ENCODE measurements at regions of chr5 and their contacts with region 1.

Region 1: GRCh38 chr5:138077065-138077696 is 6.7 kb upstream of the WNT8A start:
- DNase-seq: no peak
- ATAC-seq: peak; percentile 59
- H3K4me3 ChIP-seq: no peak overlapping the region
- H3K27ac ChIP-seq: no peak overlapping the region
- H3K4me1 ChIP-seq: peaks cover 7% of the 10 kb centered on the region
- H3K27me3 ChIP-seq: no peaks in the 10 kb centered on the region
- CTCF ChIP-seq: peak; percentile 75 to 92 (median 79)
- EP300 ChIP-seq: no peak
- POLR2A ChIP-seq: no peak
- RAD21 ChIP-seq: peak; percentile 89

Region 2: GRCh38 chr5:137344723-137345322 is 732.4 kb before region 1 on chr5:
- CTCF ChIA-PET with region 1: no interaction called
- POLR2A ChIA-PET with region 1: no interaction called
- RAD21 ChIA-PET with region 1: no interaction called
- SMC1A ChIA-PET with region 1: no interaction called
- in situ Hi-C with region 1: loop called (anchors 25 kb)
- intact Hi-C with region 1: no loop called
- DNase-seq: no peak
- ATAC-seq: peak; percentile 34; the same call in 1 of the 3 replicates
- H3K4me3 ChIP-seq: no peak overlapping the region
- H3K27ac ChIP-seq: no peak overlapping the region
- H3K4me1 ChIP-seq: no peaks in the 10 kb centered on the region
- H3K27me3 ChIP-seq: no peaks in the 10 kb centered on the region
- CTCF ChIP-seq: peak; percentile 45 to 96 (median 82)
- EP300 ChIP-seq: no peak
- POLR2A ChIP-seq: no peak
- RAD21 ChIP-seq: peak; percentile 60

Region 3: GRCh38 chr5:137921931-137922330 is 155.2 kb before region 1 on chr5:
- CTCF ChIA-PET with region 1: no interaction called
- POLR2A ChIA-PET with region 1: no interaction called
- RAD21 ChIA-PET with region 1: no interaction called
- SMC1A ChIA-PET with region 1: no interaction called
- in situ Hi-C with region 1: no loop called
- intact Hi-C with region 1: no loop called
- DNase-seq: no peak
- ATAC-seq: no peak
- H3K4me3 ChIP-seq: no peak overlapping the region
- H3K27ac ChIP-seq: no peak overlapping the region
- H3K4me1 ChIP-seq: no peaks in the 10 kb centered on the region
- H3K27me3 ChIP-seq: no peaks in the 10 kb centered on the region
- CTCF ChIP-seq: no peak
- EP300 ChIP-seq: no peak
- POLR2A ChIP-seq: no peak
- RAD21 ChIP-seq: no peak

Region 4: GRCh38 chr5:138065102-138065501 is 12.1 kb before region 1 on chr5:
- CTCF ChIA-PET with region 1: interaction called, 22 read pairs
- POLR2A ChIA-PET with region 1: no interaction called
- RAD21 ChIA-PET with region 1: interaction called, 3 read pairs
- SMC1A ChIA-PET with region 1: interaction called, 3 read pairs
- in situ Hi-C with region 1: no loop called
- intact Hi-C with region 1: no loop called
- DNase-seq: no peak
- ATAC-seq: peak; percentile 66
- H3K4me3 ChIP-seq: no peak overlapping the region
- H3K27ac ChIP-seq: no peak overlapping the region
- H3K4me1 ChIP-seq: no peaks in the 10 kb centered on the region
- H3K27me3 ChIP-seq: no peaks in the 10 kb centered on the region
- CTCF ChIP-seq: peak; percentile 45 to 66 (median 45); a peak in 5 of 6 replicates
- EP300 ChIP-seq: no peak
- POLR2A ChIP-seq: no peak
- RAD21 ChIP-seq: peak; percentile 33; the same call in 1 of the 2 replicates

Region 5: GRCh38 chr5:138095100-138095907 is 18.1 kb after region 1 on chr5:
- CTCF ChIA-PET with region 1: interaction called, 22 read pairs
- POLR2A ChIA-PET with region 1: interaction called, 4 read pairs
- RAD21 ChIA-PET with region 1: interaction called, 3 read pairs
- SMC1A ChIA-PET with region 1: interaction called, 4 read pairs
- in situ Hi-C with region 1: no loop called
- intact Hi-C with region 1: no loop called
- DNase-seq: no peak
- ATAC-seq: no peak
- H3K4me3 ChIP-seq: no peak overlapping the region
- H3K27ac ChIP-seq: no peak overlapping the region
- H3K4me1 ChIP-seq: no peaks in the 10 kb centered on the region
- H3K27me3 ChIP-seq: no peaks in the 10 kb centered on the region; a peak in 1 of 4 replicates
- CTCF ChIP-seq: no peak
- EP300 ChIP-seq: no peak
- POLR2A ChIP-seq: no peak
- RAD21 ChIP-seq: no peak

Region 6: DNA sequence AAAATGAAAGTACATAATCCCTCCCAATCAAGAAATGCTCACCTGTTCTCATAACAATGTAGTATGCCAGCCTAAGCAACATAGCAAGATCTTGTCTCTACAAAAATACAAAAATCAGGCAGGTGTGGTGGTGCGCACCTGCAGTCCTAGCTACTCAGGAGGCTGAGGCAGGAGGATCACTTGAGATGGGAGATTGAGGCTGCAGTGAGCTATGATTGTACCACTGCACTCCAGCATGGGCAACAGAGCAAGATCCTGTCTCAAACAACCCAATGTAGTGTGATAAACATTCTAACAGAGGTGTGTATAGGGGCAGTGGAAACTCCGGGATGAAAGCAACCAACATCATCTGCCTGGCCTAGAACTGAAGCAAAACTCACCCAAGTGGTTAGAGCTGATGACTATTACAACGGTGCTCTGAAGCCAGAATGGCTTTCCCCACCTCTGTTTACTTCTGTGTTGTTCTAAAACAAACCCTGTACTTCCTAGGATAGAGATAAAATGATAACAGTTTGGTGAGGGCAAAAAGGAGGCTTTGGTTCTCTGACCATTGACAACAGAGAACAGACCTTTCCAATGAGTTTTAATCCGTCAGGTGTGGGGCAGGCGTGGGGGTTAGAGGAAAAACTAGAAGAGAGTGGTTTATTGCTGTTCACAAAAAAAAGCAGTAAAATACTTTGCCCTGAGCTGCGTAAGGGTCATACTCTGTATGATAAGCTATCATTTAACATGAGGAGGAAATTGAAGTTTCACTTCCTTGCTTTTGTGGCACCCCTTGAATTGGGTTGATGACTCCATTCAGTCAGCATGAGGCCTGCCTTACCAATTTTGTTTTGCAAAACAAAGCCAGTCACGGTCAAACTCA is 25.5 kb after region 1 on chr5:
- CTCF ChIA-PET with region 1: interaction called, 11 read pairs
- POLR2A ChIA-PET with region 1: no interaction called
- RAD21 ChIA-PET with region 1: interaction called, 3 read pairs
- SMC1A ChIA-PET with region 1: interaction called, 4 read pairs
- in situ Hi-C with region 1: no loop called
- intact Hi-C with region 1: no loop called
- DNase-seq: no peak
- ATAC-seq: peak; percentile 83
- H3K4me3 ChIP-seq: no peak overlapping the region
- H3K27ac ChIP-seq: no peak overlapping the region
- H3K4me1 ChIP-seq: no peaks in the 10 kb centered on the region
- H3K27me3 ChIP-seq: no peaks in the 10 kb centered on the region
- CTCF ChIP-seq: no peak
- EP300 ChIP-seq: no peak
- POLR2A ChIP-seq: no peak
- RAD21 ChIP-seq: no peak

Region 7: DNA sequence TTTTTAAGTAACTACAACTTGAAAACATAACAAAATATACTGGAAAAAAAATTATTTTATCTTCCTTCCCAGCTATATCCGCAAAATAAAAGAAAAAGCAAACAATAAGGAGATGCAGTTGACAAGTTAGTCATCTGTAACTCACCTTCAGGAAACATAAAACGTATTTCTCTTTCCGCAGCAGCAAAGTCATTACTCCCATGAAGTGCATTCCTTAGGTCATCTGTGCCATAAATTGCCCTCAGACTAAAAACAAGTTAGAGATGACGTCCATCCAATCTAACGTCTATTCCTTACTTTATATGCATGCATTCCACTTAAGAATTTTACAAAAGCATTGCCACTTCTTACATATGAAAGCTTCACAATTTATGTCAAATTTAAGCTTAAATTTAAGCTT is 51.2 kb after region 1 on chr5:
- CTCF ChIA-PET with region 1: interaction called, 243 read pairs
- POLR2A ChIA-PET with region 1: interaction called, 3 read pairs
- RAD21 ChIA-PET with region 1: interaction called, 59 read pairs
- SMC1A ChIA-PET with region 1: interaction called, 87 read pairs
- in situ Hi-C with region 1: loop called (anchors 10 kb)
- intact Hi-C with region 1: loop called (anchors 1 kb)
- DNase-seq: no peak
- ATAC-seq: no peak
- H3K4me3 ChIP-seq: no peak overlapping the region
- H3K27ac ChIP-seq: no peak overlapping the region
- H3K4me1 ChIP-seq: no peaks in the 10 kb centered on the region
- H3K27me3 ChIP-seq: no peaks in the 10 kb centered on the region
- CTCF ChIP-seq: no peak
- EP300 ChIP-seq: no peak
- POLR2A ChIP-seq: no peak
- RAD21 ChIP-seq: no peak

Region 8: DNA sequence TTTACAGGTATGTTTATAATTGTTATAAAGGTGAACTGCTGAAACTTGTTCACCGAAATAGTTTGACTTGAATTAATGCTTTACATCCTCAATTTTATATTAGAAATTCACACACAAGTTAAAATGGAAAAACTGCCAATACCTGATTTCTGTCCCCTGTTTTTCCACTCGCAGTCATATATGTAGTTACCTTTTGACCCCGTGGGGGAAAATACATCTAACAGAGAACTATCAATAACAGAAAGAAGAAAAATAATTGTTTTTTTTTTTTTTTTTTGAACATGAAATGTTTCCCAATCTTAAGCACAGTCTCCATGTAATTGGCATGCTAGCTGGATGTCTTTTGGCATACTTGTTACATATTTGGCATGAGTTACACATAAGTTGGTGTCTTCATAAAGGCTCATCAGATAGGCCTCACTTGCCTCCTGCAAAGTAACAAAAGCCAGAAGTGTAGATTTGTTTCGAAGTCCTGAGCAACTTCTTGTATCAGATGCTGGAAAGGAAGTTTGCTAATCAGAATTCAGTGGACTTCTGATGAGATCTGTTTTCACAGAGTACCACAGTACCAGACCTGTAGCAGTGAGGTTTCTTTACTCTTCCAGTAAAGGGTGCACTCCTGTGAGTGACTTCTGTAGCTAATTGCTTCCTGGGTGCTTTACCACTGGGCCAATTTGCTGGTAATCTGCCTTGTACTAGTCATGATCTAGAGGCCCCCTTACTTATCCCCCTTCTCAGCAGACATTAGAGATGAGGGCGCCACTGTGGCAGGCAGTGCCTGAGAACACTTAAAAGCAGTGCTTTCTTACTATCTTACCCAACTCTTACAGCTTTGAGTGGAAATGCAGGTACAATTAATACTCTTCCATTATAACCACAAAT is 1534.8 kb after region 1 on chr5:
- CTCF ChIA-PET with region 1: no interaction called
- POLR2A ChIA-PET with region 1: no interaction called
- RAD21 ChIA-PET with region 1: no interaction called
- SMC1A ChIA-PET with region 1: no interaction called
- in situ Hi-C with region 1: no loop called
- intact Hi-C with region 1: no loop called
- DNase-seq: no peak
- ATAC-seq: peak; percentile 90
- H3K4me3 ChIP-seq: no peak overlapping the region
- H3K27ac ChIP-seq: peak overlapping the region; percentile 45; the same call in 1 of the 2 replicates
- H3K4me1 ChIP-seq: peaks cover 9% of the 10 kb centered on the region; the same call in 1 of the 2 replicates
- H3K27me3 ChIP-seq: no peaks in the 10 kb centered on the region
- CTCF ChIP-seq: no peak
- EP300 ChIP-seq: no peak
- POLR2A ChIP-seq: no peak
- RAD21 ChIP-seq: no peak

Measured in GM12878 (cell line).